Activated CD4-positive, alpha-beta memory T cell treated with anti-CD3 and anti-CD28 coated beads for 36 hours (primary cell): ENCODE measurements at regions of chr3 and their contacts with region 1.

Region 1: DNA sequence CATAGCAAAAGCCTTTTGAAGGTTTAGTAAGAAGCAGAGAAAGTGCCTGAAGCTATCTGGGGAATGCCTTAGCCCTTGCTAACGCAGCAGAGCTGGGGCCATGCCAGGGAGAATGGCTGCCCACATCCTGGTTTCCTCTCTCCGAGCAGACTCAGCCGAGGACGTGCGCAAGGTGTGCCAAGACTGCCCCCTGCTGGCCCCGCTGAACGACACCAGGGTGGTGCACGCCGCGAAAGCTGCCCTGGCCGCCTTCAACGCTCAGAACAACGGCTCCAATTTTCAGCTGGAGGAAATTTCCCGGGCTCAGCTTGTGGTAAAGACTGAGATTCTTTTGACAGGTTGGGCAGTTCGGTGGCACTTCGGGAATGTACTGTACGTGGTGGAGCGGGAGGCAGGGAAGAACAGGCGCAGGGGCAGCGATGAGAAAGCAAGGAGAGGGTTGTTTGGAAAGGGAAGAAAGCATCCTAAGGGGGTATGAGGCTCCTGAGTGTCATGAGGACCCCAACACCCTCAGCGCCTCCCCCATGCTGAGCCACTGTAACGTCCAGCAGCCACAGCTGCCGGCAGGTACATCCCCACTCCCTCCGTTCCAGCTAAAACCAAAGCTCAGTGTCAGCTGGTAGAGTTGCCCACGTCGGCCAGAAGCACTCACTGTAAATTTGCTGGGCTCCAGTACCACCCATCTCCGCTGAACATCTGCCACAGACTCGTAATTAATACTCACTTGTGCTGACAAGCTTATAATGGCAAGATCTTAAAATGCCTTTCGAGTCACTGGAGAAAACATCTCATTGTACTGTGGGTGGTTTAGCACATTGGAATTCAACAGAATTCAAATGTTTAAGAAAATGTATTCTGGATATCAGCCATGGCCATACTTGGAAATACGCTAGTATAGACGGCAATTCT is 4.4 kb downstream of the AHSG start:
- DNase-seq: peak; percentile 95
- H3K4me3 Mint-ChIP-seq: peak overlapping the region; percentile 62
- H3K27ac Mint-ChIP-seq: peak overlapping the region; percentile 70
- H3K4me1 Mint-ChIP-seq: peaks cover 20% of the 10 kb centered on the region
- H3K27me3 Mint-ChIP-seq: peaks cover 24% of the 10 kb centered on the region

Region 2: DNA sequence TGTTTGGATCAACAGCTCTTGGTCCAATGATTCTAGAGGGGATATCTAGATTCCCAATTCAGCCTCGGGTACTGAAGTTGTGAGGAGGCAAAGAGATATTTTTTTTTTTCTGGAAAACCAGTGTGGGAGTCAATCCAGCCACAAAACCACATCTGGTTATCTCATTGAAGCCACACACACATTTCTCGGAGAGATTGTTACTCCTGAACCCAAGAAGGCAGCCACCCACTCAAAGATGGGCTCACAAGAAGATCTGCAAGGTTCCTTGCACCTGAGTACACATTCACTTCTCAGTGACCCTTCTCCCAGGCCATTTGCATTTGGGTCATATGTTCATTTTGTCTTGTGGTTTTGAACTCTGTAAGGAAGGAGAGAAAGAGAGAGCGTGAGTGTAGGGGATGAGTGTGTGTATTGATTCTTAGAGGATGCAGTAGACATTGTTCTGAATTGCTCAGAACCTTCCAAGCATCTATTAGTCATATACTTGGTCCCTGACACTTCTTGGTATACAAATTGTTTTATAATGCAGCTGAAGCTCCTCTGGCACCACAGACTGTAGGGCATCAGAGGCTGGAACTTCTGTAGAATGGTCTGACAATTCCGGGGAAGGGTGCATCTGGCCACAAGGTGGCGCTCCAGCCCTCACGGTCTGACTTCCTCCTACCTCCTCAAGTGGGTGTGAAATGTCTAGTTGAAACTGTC is 640.2 kb before region 1 on chr3:
- CTCF ChIA-PET with region 1: interaction called, 47 read pairs
- POLR2A ChIA-PET with region 1: no interaction called
- intact Hi-C with region 1: loop called (anchors 2 kb)
- DNase-seq: peak; percentile 92
- H3K4me3 Mint-ChIP-seq: no peak overlapping the region
- H3K27ac Mint-ChIP-seq: peak overlapping the region; percentile 23
- H3K4me1 Mint-ChIP-seq: peaks cover 15% of the 10 kb centered on the region
- H3K27me3 Mint-ChIP-seq: no peaks in the 10 kb centered on the region

Region 3: GRCh38 chr3:186108941-186109865 is 508.1 kb before region 1 on chr3 and contains the start of gene ETV5:
- CTCF ChIA-PET with region 1: no interaction called
- POLR2A ChIA-PET with region 1: no interaction called
- intact Hi-C with region 1: loop called (anchors 1 kb)
- DNase-seq: peak; percentile 96
- H3K4me3 Mint-ChIP-seq: peak within 1 kb of the TSS; percentile 67
- H3K27ac Mint-ChIP-seq: no peak within 1 kb of the TSS
- H3K4me1 Mint-ChIP-seq: peaks cover 42% of the 10 kb centered on the region
- H3K27me3 Mint-ChIP-seq: peaks cover 77% of the 10 kb centered on the region
- total RNA-seq, gene ETV5: 0.74 to 1.3 TPM

Region 4: GRCh38 chr3:186476044-186476468 is 141.2 kb before region 1 on chr3:
- CTCF ChIA-PET with region 1: no interaction called
- POLR2A ChIA-PET with region 1: no interaction called
- intact Hi-C with region 1: no loop called
- DNase-seq: no peak
- H3K4me3 Mint-ChIP-seq: no peak overlapping the region
- H3K27ac Mint-ChIP-seq: no peak overlapping the region
- H3K4me1 Mint-ChIP-seq: peaks cover 7% of the 10 kb centered on the region
- H3K27me3 Mint-ChIP-seq: peaks cover 2% of the 10 kb centered on the region

Region 5: GRCh38 chr3:186540221-186540834 is 77.0 kb before region 1 on chr3:
- CTCF ChIA-PET with region 1: interaction called, 37 read pairs
- POLR2A ChIA-PET with region 1: no interaction called
- intact Hi-C with region 1: loop called (anchors 2 kb)
- DNase-seq: peak; percentile 90
- H3K4me3 Mint-ChIP-seq: no peak overlapping the region
- H3K27ac Mint-ChIP-seq: peak overlapping the region; percentile 25
- H3K4me1 Mint-ChIP-seq: peaks cover 57% of the 10 kb centered on the region
- H3K27me3 Mint-ChIP-seq: no peaks in the 10 kb centered on the region

Region 6: DNA sequence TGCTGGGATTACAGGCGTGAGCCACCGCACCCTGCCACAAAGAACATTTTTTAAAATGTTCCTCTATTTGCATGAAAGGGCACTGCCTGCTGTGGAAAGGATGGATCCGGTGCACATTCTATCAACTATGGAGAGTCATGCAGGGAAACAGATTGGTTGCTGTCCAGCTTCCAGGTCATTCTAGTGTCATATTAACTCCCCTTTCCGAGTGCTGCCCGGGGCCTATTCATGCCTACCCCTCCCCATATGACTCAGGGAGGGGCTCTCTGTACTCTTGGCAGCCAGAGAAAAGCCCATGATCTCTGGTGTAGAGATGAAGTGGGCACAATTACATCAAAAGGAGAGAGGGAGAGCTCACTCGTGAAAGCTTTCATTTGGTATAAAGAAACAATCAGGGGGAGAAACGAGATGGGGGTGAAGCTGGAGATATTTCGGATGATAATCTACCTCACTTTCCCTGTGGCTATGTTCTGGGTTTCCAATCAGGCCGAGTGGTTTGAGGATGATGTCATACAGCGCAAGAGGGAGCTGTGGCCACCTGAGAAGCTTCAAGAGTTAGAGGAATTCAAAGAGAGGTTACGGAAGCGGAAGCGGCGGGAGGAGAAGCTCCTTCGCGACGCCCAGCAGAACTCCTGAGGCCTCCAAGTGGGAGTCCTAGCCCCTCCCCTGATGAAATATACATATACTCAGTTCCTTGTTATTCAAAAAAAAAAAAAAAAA is 20.6 kb before region 1 on chr3:
- CTCF ChIA-PET with region 1: interaction called, 41 read pairs
- POLR2A ChIA-PET with region 1: no interaction called
- intact Hi-C with region 1: loop called (anchors 2 kb)
- DNase-seq: no peak
- H3K4me3 Mint-ChIP-seq: no peak overlapping the region
- H3K27ac Mint-ChIP-seq: no peak overlapping the region
- H3K4me1 Mint-ChIP-seq: no peaks in the 10 kb centered on the region
- H3K27me3 Mint-ChIP-seq: peaks cover 2% of the 10 kb centered on the region

Region 7: GRCh38 chr3:186772701-186773424 is 155.6 kb after region 1 on chr3:
- CTCF ChIA-PET with region 1: interaction called, 15 read pairs
- POLR2A ChIA-PET with region 1: interaction called, 4 read pairs
- intact Hi-C with region 1: no loop called
- DNase-seq: peak; percentile 84
- H3K4me3 Mint-ChIP-seq: peak overlapping the region; percentile 82
- H3K27ac Mint-ChIP-seq: peak overlapping the region; percentile 88
- H3K4me1 Mint-ChIP-seq: peaks cover 12% of the 10 kb centered on the region
- H3K27me3 Mint-ChIP-seq: no peaks in the 10 kb centered on the region

Region 8: DNA sequence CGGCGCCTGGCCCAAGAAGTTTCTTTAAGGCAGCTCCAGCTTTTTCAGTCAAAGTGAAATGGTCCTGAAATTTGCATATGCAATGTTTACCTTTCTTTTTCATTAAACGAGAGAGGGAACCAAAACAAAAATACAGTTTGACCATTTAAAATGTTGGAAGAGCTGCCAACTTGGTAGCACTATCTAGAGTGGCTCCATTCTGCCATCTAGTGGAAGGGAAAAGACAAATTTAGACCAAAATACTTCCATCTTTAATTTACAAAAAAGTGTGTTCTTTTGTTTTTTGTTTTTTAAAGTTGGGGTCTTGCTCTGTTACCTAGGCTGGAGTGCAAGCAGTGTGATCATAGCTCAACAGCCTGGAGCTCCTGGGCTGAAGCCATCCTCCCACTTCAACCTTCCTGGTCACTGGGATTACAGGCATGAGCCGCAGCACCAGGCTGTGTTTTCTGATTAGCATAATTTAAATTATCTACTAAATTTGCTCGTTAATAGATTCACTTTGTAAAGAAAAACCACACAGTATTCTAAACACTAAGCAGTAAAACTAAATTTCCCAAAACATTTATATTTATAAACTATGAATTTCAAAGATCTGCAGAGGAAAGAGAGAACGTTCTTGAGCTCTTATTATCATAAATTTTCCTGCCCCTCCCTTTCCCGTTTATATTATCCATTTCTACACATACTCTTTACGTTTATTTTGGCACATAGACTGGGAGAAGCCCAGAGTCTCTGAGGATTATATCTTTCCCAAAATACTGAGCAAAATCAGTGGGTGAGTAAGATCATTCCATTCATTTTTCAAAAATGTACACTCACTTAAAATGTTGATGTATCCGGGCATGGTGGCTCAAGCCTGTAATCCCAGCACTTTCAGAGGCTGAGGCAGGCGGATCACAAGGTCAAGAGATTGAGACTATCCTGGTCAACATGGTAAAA is 204.4 kb after region 1 on chr3:
- CTCF ChIA-PET with region 1: interaction called, 159 read pairs
- POLR2A ChIA-PET with region 1: interaction called, 3 read pairs
- intact Hi-C with region 1: loop called (anchors 1 kb)
- DNase-seq: no peak
- H3K4me3 Mint-ChIP-seq: no peak overlapping the region
- H3K27ac Mint-ChIP-seq: no peak overlapping the region
- H3K4me1 Mint-ChIP-seq: peaks cover 22% of the 10 kb centered on the region
- H3K27me3 Mint-ChIP-seq: peaks cover 10% of the 10 kb centered on the region